AG04449 (cell line): ENCODE measurements at regions of chr13 and their contacts with region 1.

Region 1: DNA sequence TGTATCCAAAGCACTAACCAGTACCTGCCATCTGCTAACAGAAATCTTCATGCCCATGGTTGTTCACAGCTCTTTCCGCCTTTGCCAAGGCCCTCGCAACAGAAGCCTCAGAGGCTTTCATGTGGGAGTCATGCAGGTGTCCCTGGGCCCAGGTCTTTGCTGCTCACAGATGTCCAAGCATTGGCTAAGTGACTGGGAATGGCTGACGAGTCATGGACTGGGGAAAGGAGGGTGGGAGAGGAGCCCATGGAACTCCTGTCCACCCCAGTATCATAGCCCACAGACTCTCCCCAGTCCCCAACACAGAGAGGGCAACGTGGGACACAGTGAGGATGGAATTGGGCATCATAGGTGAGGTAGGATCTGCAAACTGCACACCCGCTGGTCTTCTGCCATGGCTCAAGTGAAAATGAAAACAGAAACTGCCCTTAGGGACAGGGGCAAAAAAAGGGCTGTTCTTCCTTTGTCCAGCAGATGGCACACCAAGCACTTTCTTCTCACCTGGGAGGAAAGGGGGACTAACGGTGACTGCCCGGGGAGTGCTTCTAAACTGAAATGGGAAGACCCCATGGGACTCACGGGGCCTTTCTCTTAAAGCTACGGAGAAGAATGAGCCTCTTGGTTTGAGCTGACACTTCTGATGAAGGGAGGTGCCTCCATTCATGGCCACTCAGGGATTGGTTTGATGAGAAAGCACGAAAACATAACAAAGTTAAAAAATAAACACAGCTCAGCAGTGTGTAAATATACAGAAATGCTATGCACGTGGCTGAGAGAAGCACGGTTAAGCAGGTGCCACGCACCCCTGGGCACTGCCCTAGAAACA is 11.1 kb upstream of the DHRS12 start:
- DNase-seq: no peak
- H3K4me3 ChIP-seq: peak overlapping the region; percentile 45
- CTCF ChIP-seq: peak; percentile 74

Region 2: GRCh38 chr13:51803422-51804294 is 11.4 kb before region 1 on chr13 and contains the start of gene DHRS12:
- CTCF ChIA-PET with region 1: interaction called, 37 read pairs
- POLR2A ChIA-PET with region 1: no interaction called
- DNase-seq: no peak
- H3K4me3 ChIP-seq: peak within 1 kb of the TSS; percentile 74
- CTCF ChIP-seq: no peak

Region 3: GRCh38 chr13:51825165-51825592 is 10.1 kb after region 1 on chr13:
- CTCF ChIA-PET with region 1: interaction called, 67 read pairs
- POLR2A ChIA-PET with region 1: no interaction called
- DNase-seq: no peak
- H3K4me3 ChIP-seq: no peak overlapping the region
- CTCF ChIP-seq: no peak

Region 4: DNA sequence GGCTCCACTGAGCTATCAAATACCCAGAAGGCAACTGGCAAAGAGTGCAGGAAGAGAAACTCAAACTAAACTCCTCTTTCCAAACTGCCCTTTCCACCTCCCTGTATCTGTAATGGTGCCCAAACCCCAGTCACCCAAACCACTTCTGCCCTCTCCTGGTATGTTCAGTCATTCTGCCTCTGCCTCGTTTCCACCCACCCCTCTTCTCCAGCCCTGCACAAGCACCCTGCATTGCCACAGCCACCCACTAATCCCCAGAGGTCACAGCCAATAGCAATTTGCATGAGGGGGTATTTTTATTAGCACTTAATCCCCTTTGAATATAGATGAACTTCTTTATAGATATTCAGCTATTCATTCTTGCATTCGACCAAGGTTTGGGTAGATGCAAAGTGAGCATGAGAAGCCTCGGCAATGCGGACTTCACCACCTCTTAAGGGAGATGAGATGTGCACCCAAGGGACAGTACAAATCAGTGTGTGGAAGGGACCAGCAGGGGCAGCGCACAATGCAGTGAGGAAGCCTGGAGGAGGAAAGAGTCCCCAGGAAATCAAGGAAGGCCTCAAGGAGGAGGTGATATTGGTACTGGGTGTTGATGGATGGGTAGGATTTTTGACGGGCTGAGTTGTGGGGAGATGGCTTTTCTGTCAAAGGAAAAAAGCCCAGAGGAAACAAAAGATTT is 17.6 kb after region 1 on chr13:
- CTCF ChIA-PET with region 1: interaction called, 67 read pairs
- POLR2A ChIA-PET with region 1: no interaction called
- DNase-seq: no peak
- H3K4me3 ChIP-seq: no peak overlapping the region
- CTCF ChIP-seq: peak; percentile 38

Region 5: GRCh38 chr13:51858433-51859247 is 43.6 kb after region 1 on chr13:
- CTCF ChIA-PET with region 1: interaction called, 17 read pairs
- POLR2A ChIA-PET with region 1: no interaction called
- DNase-seq: no peak
- H3K4me3 ChIP-seq: no peak overlapping the region
- CTCF ChIP-seq: no peak

Region 6: GRCh38 chr13:52194184-52194868 is 379.3 kb after region 1 on chr13:
- CTCF ChIA-PET with region 1: interaction called, 30 read pairs
- POLR2A ChIA-PET with region 1: no interaction called
- DNase-seq: peak; percentile 17
- H3K4me3 ChIP-seq: peak overlapping the region; percentile 92
- CTCF ChIP-seq: no peak